Gastrocnemius medialis (tissue), 4 donors: ENCODE measurements at regions of chr2 and their contacts with region 1.

Region 1: GRCh38 chr2:241217320-241218031 is 29.0 kb downstream of the ANO7 start:
- DNase-seq: peak; percentile 29 to 74
- ATAC-seq: peak; percentile 69 to 81
- H3K4me3 ChIP-seq: peak overlapping the region; percentile 57 to 69 (median 63)
- H3K27ac ChIP-seq: peak overlapping the region; percentile 73 to 94 (median 79)
- H3K4me1 ChIP-seq: peaks cover 4 to 16% of the 10 kb centered on the region in 2 donors
- H3K27me3 ChIP-seq: no peaks in the 10 kb centered on the region
- CTCF ChIP-seq: peak in 1 of 5 experiments; percentile 13
- POLR2A ChIP-seq: no peak

Region 2: GRCh38 chr2:241102239-241102803 is 115.2 kb before region 1 on chr2 and contains the start of gene MTERF4:
- in situ Hi-C with region 1: no loop called
- intact Hi-C with region 1: loop called (anchors 10 kb)
- DNase-seq: peak; percentile 76 to 88
- ATAC-seq: peak; percentile 88 to 94
- H3K4me3 ChIP-seq: peak within 1 kb of the TSS; percentile 89 to 99 (median 94)
- H3K27ac ChIP-seq: peak within 1 kb of the TSS; percentile 85 to 90 (median 88)
- H3K4me1 ChIP-seq: peaks cover 27 to 28% of the 10 kb centered on the region in 2 donors
- H3K27me3 ChIP-seq: no peaks in the 10 kb centered on the region
- CTCF ChIP-seq: no peak
- POLR2A ChIP-seq: peak; percentile 71 to 73
- total RNA-seq, gene MTERF4: 21.8 to 49.3 (median 37.0) TPM

Region 3: DNA sequence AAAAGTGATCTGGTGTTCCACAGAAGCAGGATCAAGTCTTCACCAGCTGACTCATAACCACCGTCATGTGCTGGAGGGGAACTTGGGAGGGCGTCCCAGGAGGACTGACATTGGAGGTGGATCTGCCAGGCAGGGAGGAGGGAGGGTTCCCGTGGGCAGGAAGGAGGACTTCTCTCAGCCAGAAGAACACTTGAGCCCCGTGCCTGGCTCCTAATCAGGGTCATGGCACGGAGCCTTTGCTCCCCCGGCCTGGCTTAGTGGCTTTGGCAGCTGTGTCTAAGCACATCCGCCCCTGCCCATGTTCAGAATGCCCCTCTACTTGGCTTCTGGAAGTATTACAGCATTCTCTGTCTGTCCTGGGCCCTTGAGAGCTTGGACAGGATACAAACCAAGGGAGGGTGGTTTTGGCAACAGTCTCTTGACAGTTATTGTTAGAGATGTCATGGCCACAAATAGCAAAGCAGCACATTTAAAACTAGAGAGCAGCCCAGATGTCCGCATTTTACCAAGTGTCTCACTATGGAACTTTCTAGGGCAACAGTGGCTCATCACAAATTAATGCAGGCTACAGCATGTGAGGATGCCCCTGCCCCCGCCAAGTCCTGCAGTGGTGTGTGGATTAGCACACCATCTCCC is 55.7 kb before region 1 on chr2:
- in situ Hi-C with region 1: no loop called
- intact Hi-C with region 1: loop called (anchors 2 kb)
- DNase-seq: peak; percentile 95 to 99
- ATAC-seq: peak; percentile 93 to 94
- H3K4me3 ChIP-seq: no peak overlapping the region
- H3K27ac ChIP-seq: peak overlapping the region; percentile 82 to 92 (median 91)
- H3K4me1 ChIP-seq: peaks cover 21 to 22% of the 10 kb centered on the region in 2 donors
- H3K27me3 ChIP-seq: no peaks in the 10 kb centered on the region
- CTCF ChIP-seq: peak in 1 of 5 experiments; percentile 35
- POLR2A ChIP-seq: peak in 1 of 2 donors; percentile 23

Region 4: DNA sequence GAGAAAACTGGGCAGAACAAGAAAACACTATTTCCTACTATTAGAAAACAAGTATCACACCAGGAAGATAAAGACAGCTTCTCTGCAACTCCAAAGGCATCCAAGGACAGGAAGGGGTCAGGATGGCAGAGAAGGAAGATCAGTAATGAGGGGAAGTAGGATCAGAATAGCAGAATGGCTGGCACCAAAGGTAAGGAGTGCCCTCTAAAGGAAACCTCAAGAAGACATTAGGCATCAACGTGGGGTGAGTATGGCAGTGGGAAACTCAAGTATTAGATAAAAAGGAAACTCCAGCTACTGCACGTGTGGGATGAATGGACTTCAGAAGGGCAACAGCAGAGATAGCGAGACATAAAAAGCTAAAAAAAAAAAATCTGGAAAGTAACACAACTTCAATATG is 72.1 kb after region 1 on chr2:
- in situ Hi-C with region 1: no loop called
- intact Hi-C with region 1: no loop called
- DNase-seq: no peak
- ATAC-seq: no peak
- H3K4me3 ChIP-seq: no peak overlapping the region
- H3K27ac ChIP-seq: no peak overlapping the region
- H3K4me1 ChIP-seq: peaks cover 12 to 33% of the 10 kb centered on the region in 2 donors
- H3K27me3 ChIP-seq: no peaks in the 10 kb centered on the region
- CTCF ChIP-seq: no peak
- POLR2A ChIP-seq: no peak

Region 5: DNA sequence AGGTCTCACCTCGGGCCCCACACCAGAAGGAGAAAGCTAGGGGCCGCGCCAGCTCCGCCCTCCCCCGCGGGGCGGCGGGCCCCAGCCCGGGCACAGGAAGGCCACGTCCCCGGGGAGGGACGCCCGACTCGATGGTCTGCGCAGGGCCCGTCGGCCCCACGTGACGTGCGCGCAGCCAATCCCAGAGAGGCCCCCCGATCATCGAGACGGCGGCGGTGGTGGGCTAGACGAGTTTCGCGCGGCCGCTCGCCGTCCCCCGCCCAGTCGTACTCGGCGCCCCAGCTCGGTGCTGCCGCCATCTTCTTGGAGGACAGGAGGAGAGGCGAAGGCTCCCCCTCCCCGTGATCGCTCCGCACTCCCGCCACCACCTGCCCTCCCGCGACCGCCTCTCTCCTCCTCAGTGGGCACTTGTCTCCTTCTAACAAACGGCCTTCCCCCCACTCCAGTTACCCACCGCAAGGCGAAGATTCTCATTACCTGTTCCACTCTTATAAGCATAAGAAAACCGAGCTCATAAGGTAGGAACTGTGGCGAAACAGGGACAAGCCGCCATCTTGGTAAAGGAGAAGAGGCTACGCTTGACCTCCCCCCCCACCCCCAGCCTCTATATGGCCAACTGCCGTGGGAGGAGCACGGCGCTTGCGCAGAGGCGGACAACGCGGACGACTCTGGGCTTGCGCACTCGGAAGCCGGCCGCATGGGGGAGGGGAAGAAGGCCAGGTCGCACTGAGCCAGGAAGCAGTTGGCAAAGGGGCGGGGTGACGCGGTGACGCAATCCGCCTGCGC is 97.8 kb after region 1 on chr2 and contains the start of gene HDLBP:
- in situ Hi-C with region 1: no loop called
- intact Hi-C with region 1: loop called (anchors 2 kb)
- DNase-seq: peak; percentile 98 to 99
- ATAC-seq: peak; percentile 80 to 87
- H3K4me3 ChIP-seq: peak within 1 kb of the TSS; percentile 67 to 92 (median 83)
- H3K27ac ChIP-seq: peak within 1 kb of the TSS; percentile 97 to 99 (median 98)
- H3K4me1 ChIP-seq: peaks cover 66 to 73% of the 10 kb centered on the region in 2 donors
- H3K27me3 ChIP-seq: no peaks in the 10 kb centered on the region
- CTCF ChIP-seq: peak in 2 of 5 experiments; percentile 15 to 16
- POLR2A ChIP-seq: peak; percentile 90 to 93
- total RNA-seq, gene HDLBP: 383 to 486 (median 444) TPM